CD8-positive, alpha-beta memory T cell (primary cell): ENCODE measurements at regions of chr17 and their contacts with region 1.

Region 1: GRCh38 chr17:39621523-39622379 is 5.0 kb upstream of the PPP1R1B start:
- DNase-seq: peak; percentile 80 to 89 (median 83)
- H3K4me3 ChIP-seq: peak overlapping the region; percentile 50
- H3K4me3 Mint-ChIP-seq: peak overlapping the region; percentile 70 to 91 (median 83)
- H3K27ac ChIP-seq: peak overlapping the region; percentile 57
- H3K27ac Mint-ChIP-seq: peak overlapping the region; percentile 80 to 92 (median 87)
- H3K4me1 ChIP-seq: peaks cover 32% of the 10 kb centered on the region
- H3K4me1 Mint-ChIP-seq: peaks cover 20 to 34% (median 22%) of the 10 kb centered on the region in 3 donors
- H3K27me3 ChIP-seq: peaks cover 17% of the 10 kb centered on the region
- H3K27me3 Mint-ChIP-seq: peaks cover 10 to 14% of the 10 kb centered on the region in 2 donors

Region 2: GRCh38 chr17:39533899-39534298 is 87.9 kb before region 1 on chr17:
- CTCF ChIA-PET with region 1: no interaction called
- POLR2A ChIA-PET with region 1: no interaction called
- DNase-seq: no peak
- H3K4me3 ChIP-seq: no peak overlapping the region
- H3K4me3 Mint-ChIP-seq: no peak overlapping the region
- H3K27ac ChIP-seq: no peak overlapping the region
- H3K27ac Mint-ChIP-seq: no peak overlapping the region
- H3K4me1 ChIP-seq: no peaks in the 10 kb centered on the region
- H3K4me1 Mint-ChIP-seq: peaks cover 6 to 16% (median 10%) of the 10 kb centered on the region in 3 donors
- H3K27me3 ChIP-seq: no peaks in the 10 kb centered on the region
- H3K27me3 Mint-ChIP-seq: no peaks in the 10 kb centered on the region

Region 3: DNA sequence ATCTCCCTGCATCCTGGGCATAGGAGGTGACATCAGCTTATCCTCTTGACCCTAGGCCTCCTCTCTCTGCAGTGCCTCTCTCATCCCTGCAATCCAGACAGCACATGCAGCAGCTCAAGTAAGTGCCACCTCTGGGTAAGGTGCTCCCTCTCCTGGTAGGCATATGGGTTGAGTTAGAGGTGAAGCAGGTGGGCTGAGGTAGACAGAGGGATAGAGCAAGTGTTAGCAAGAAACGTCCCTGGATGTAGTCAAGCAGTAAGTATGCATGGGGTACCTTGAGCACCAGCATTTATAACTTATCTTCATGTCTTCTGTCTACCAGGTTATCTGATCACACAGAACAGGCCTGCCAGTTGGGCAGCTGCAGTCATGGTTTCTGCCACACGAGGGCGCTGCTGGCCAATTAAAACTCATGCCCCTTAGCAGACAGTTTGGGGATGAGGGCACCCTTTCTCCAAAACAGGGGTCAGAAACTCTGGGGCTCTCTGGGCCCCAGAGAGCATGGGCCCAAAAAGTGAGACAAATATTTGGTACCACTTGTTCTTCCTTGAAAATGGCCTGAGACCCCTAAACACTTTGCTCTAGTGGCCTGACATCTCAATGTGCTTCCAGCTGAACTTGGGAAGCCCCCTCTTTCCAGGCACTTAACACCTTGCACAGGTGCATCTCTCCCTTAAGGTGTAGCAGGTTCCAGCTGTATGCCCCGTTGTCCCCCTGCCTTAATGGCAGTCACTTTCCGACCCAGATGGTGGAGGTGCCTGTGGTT is 73.9 kb before region 1 on chr17:
- CTCF ChIA-PET with region 1: interaction called, 14 read pairs
- POLR2A ChIA-PET with region 1: interaction called, 4 read pairs
- DNase-seq: peak; percentile 54 to 77 (median 66)
- H3K4me3 ChIP-seq: no peak overlapping the region
- H3K4me3 Mint-ChIP-seq: no peak overlapping the region
- H3K27ac ChIP-seq: no peak overlapping the region
- H3K27ac Mint-ChIP-seq: peak overlapping the region in 1 of 8 donors; percentile 31
- H3K4me1 ChIP-seq: no peaks in the 10 kb centered on the region
- H3K4me1 Mint-ChIP-seq: no peaks in the 10 kb centered on the region
- H3K27me3 ChIP-seq: no peaks in the 10 kb centered on the region
- H3K27me3 Mint-ChIP-seq: no peaks in the 10 kb centered on the region

Region 4: GRCh38 chr17:39643271-39643670 is 21.5 kb after region 1 on chr17:
- CTCF ChIA-PET with region 1: interaction called, 161 read pairs
- POLR2A ChIA-PET with region 1: no interaction called
- DNase-seq: no peak
- H3K4me3 ChIP-seq: no peak overlapping the region
- H3K4me3 Mint-ChIP-seq: no peak overlapping the region
- H3K27ac ChIP-seq: no peak overlapping the region
- H3K27ac Mint-ChIP-seq: peak overlapping the region in 5 of 8 donors; percentile 38 to 66 (median 61)
- H3K4me1 ChIP-seq: peaks cover 60% of the 10 kb centered on the region
- H3K4me1 Mint-ChIP-seq: peaks cover 55 to 83% (median 69%) of the 10 kb centered on the region in 3 donors
- H3K27me3 ChIP-seq: no peaks in the 10 kb centered on the region
- H3K27me3 Mint-ChIP-seq: no peaks in the 10 kb centered on the region

Region 5: DNA sequence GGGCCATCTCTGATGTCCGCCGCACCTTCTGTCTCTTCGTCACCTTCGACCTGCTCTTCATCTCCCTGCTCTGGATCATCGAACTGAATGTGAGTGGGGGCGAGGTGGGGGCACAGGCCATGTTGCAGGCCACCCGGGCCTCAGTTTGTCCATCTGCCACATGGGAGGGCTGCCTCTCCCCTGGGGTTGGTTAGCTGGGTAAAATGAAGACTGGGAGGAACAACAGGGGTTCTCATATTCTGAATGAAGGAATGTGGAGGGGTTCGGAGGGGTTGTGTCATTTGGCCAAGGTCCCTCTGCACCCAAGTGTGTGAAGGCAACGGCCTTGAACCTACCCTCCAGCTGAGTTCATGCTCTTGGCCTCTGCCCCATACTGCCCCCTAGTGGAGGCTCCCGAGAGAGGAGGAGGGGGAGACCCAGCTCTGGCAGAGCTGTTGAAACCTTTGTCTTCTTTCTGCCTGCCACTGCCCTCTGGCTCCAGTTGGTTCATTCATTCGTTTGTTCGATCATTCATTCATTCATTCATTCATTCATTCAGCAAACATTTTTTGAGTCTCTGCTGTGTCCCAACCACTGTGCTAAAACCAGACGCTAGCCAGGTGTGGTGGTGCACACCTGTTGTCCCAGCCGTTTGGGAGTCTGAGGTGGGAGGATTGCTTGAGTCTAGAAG is 32.0 kb after region 1 on chr17:
- CTCF ChIA-PET with region 1: interaction called, 54 read pairs
- POLR2A ChIA-PET with region 1: no interaction called
- DNase-seq: peak; percentile 61 to 84 (median 71)
- H3K4me3 ChIP-seq: no peak overlapping the region
- H3K4me3 Mint-ChIP-seq: no peak overlapping the region
- H3K27ac ChIP-seq: no peak overlapping the region
- H3K27ac Mint-ChIP-seq: peak overlapping the region in 5 of 8 donors; percentile 6 to 79 (median 61)
- H3K4me1 ChIP-seq: peaks cover 29% of the 10 kb centered on the region
- H3K4me1 Mint-ChIP-seq: peaks cover 37 to 58% (median 47%) of the 10 kb centered on the region in 3 donors
- H3K27me3 ChIP-seq: no peaks in the 10 kb centered on the region
- H3K27me3 Mint-ChIP-seq: peaks cover 0 to 1% of the 10 kb centered on the region in 2 donors

Region 6: DNA sequence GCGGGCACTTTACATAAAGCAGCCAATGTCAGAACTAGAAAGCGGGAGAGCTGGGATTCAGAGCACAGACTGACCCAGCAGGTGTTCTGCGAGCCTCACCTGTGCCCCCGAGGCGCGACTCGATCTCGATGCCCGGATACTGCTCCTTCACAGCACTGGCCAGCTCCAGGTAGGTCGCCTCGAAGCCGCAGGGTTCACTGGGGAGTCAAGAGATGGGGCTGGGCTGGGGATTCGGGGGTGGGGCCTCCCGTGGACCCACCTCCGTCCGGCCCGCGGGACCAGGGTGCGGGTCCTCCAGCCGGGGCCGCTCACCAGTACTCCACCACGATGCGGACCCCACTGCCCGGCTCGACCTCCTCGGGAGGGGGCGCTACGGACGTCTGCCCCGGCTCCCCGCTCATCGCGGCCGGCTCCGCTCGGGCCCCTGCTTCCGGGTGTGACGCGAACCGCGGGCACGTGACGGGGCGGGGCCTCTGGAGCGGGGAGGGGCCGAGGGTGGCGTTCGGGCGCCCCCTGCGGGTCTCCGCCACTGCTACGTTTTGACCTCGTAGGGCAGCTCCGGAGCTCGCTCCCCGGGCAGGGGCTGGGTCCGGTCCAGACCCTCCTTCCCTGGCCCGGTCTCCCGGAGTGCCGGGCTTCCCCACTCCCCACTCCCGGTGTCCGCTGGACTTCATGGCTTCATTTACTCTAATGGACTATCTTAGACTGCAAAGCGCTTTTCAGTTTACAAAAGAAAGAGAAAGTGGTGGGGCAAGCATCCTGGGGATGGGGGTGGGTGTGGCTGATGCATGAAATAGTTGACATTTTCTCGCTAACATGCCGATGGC is 108.6 kb after region 1 on chr17 and contains the start of gene MIEN1:
- CTCF ChIA-PET with region 1: interaction called, 72 read pairs
- POLR2A ChIA-PET with region 1: interaction called, 5 read pairs
- DNase-seq: peak; percentile 91 to 95 (median 94)
- H3K4me3 ChIP-seq: peak within 1 kb of the TSS; percentile 91
- H3K4me3 Mint-ChIP-seq: peak within 1 kb of the TSS; percentile 89 to 95 (median 91)
- H3K27ac ChIP-seq: peak within 1 kb of the TSS; percentile 90
- H3K27ac Mint-ChIP-seq: peak within 1 kb of the TSS; percentile 89 to 98 (median 94)
- H3K4me1 ChIP-seq: peaks cover 15% of the 10 kb centered on the region
- H3K4me1 Mint-ChIP-seq: peaks cover 14 to 21% (median 15%) of the 10 kb centered on the region in 3 donors
- H3K27me3 ChIP-seq: no peaks in the 10 kb centered on the region
- H3K27me3 Mint-ChIP-seq: no peaks in the 10 kb centered on the region
- total RNA-seq, gene MIEN1: 42.3 to 46.2 TPM